AG04449 (cell line): ENCODE measurements at regions of chr6 and their contacts with region 1.

Region 1: GRCh38 chr6:114108119-114109002 is 137.4 kb upstream of the HDAC2 start:
- DNase-seq: no peak
- H3K4me3 ChIP-seq: no peak overlapping the region
- CTCF ChIP-seq: peak; percentile 73

Region 2: GRCh38 chr6:113970805-113971676 is 137.3 kb before region 1 on chr6 and contains the start of gene HDAC2:
- CTCF ChIA-PET with region 1: interaction called, 12 read pairs
- POLR2A ChIA-PET with region 1: no interaction called
- DNase-seq: no peak
- H3K4me3 ChIP-seq: peak within 1 kb of the TSS; percentile 89
- CTCF ChIP-seq: no peak

Region 3: GRCh38 chr6:113994918-113995342 is 113.4 kb before region 1 on chr6:
- CTCF ChIA-PET with region 1: interaction called, 425 read pairs
- POLR2A ChIA-PET with region 1: interaction called, 6 read pairs
- DNase-seq: peak; percentile 73
- H3K4me3 ChIP-seq: no peak overlapping the region
- CTCF ChIP-seq: peak; percentile 77

Region 4: DNA sequence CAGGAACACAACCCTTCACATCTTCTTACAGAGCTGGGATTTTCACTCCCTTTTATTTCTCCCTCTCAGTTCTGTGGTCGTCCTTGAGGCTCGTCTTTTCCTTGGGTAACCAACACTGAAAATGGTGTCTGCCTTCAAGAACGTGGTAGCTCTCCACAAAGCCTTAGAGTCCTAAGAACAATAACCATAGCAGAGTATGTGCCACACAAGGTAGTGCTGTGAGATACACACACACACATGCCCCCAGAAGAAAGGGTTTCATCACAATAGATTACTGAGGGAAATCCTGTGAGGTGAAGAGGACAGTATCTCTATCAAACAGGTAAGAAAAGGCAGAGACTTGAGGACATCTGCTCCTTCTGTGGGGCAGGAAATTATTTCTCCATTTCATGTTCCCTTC is 32.6 kb before region 1 on chr6:
- CTCF ChIA-PET with region 1: interaction called, 10 read pairs
- POLR2A ChIA-PET with region 1: no interaction called
- DNase-seq: no peak
- H3K4me3 ChIP-seq: no peak overlapping the region
- CTCF ChIP-seq: no peak

Region 5: DNA sequence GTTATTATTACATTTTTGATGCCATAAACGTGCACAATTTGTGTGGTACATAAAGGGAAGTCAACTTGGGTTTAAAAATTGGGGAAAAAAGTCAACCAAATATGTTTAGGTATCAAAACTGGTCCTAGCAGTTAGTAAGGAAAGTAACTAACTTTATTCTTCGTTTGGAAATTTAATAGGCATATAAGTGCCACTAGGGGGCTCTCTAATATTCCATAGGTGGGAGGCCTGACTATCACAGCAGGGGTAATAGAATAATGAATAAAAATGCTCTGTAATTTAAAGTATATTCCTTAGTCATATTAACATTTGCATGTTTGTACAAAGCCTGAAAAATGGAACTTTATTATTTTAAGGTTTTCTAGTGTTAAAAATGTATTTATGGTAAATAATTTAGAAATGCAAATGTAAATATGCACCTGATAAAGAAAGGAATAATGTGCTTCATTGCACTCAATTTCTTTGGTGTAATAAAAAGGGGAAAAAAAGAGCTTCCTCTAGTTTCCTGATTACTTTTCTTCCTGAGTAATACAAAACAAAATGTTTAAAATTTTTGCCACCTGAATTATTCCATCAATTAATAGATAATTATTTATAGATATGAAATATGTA is 11.7 kb before region 1 on chr6:
- CTCF ChIA-PET with region 1: interaction called, 90 read pairs
- POLR2A ChIA-PET with region 1: no interaction called
- DNase-seq: no peak
- H3K4me3 ChIP-seq: no peak overlapping the region
- CTCF ChIP-seq: peak; percentile 28

Region 6: GRCh38 chr6:114304304-114304887 is 196.0 kb after region 1 on chr6:
- CTCF ChIA-PET with region 1: interaction called, 23 read pairs
- POLR2A ChIA-PET with region 1: no interaction called
- DNase-seq: no peak
- H3K4me3 ChIP-seq: no peak overlapping the region
- CTCF ChIP-seq: peak; percentile 20